ENCODE measurements at regions of chr10 and their contacts with region 1.

Region 1: GRCh38 chr10:93406364-93407145 is 75.6 kb downstream of the MYOF start:
- DNase-seq: no peak
- ATAC-seq: no peak
- H3K4me3 ChIP-seq: no peak overlapping the region
- H3K4me3 Mint-ChIP-seq: no peak overlapping the region
- H3K27ac ChIP-seq: no peak overlapping the region
- H3K27ac Mint-ChIP-seq: no peak overlapping the region
- H3K4me1 ChIP-seq: peaks cover 21 to 28% of the 10 kb centered on the region in 2 experiments
- H3K4me1 Mint-ChIP-seq: peaks cover 32 to 39% (median 36%) of the 10 kb centered on the region in 3 donors
- H3K27me3 ChIP-seq: no peaks in the 10 kb centered on the region
- H3K27me3 Mint-ChIP-seq: no peaks in the 10 kb centered on the region

Region 2: GRCh38 chr10:92790440-92790839 is 616.1 kb before region 1 on chr10:
- CTCF ChIA-PET with region 1: interaction called in 1 of 2 experiments, 12 read pairs
- POLR2A ChIA-PET with region 1: no interaction called
- DNase-seq: no peak
- ATAC-seq: no peak
- H3K4me3 ChIP-seq: no peak overlapping the region
- H3K4me3 Mint-ChIP-seq: no peak overlapping the region
- H3K27ac ChIP-seq: no peak overlapping the region
- H3K27ac Mint-ChIP-seq: no peak overlapping the region
- H3K4me1 ChIP-seq: no peaks in the 10 kb centered on the region
- H3K4me1 Mint-ChIP-seq: peaks cover 0 to 6% (median 0%) of the 10 kb centered on the region in 3 donors
- H3K27me3 ChIP-seq: peaks cover 0 to 17% of the 10 kb centered on the region in 2 experiments
- H3K27me3 Mint-ChIP-seq: peaks cover 11 to 28% of the 10 kb centered on the region in 2 donors

Region 3: DNA sequence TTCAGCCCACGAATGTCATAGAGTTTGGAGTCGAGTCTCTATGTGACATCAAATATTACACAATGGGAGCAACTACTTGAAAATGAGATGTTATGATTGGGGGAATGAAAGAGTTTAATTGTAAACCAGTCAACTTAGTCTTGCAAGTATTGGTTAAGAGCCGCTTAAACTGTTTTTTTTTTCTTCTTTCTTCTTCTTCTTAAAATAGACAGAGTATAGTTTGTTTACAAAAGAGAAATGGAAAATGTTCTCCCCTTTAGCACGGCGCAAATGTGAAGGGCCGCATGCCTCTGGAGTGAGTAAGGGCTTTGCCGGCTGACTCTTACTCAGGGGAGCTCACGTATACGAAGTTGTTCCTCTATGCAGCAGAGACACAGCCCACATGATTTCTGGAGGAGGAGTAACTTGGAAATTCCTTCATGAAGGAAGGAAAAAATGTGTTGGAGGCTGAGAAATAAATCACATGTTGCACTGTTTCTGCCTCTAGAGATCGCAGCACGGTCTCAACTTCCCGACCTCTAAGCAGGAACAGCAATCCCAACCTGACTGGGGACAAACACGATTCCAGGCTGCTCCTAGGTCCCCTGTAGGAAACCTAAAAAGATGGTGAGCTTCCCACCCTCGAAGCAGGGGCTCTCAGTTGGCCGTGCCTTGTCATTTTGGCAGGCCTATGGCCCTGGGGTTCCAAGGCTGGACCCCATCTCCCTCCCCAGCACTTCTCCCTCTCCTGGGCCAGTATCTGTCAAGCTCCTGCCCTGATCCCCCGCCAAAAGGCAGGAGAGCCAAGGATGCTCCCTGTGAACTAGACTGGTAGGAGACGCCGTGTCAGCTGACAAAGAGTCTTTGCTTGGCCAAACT is 30.8 kb after region 1 on chr10:
- CTCF ChIA-PET with region 1: no interaction called
- POLR2A ChIA-PET with region 1: no interaction called
- DNase-seq: peak in 1 of 35 experiments; percentile 3
- ATAC-seq: no peak
- H3K4me3 ChIP-seq: no peak overlapping the region
- H3K4me3 Mint-ChIP-seq: no peak overlapping the region
- H3K27ac ChIP-seq: no peak overlapping the region
- H3K27ac Mint-ChIP-seq: no peak overlapping the region
- H3K4me1 ChIP-seq: no peaks in the 10 kb centered on the region
- H3K4me1 Mint-ChIP-seq: no peaks in the 10 kb centered on the region
- H3K27me3 ChIP-seq: peaks cover 0 to 3% of the 10 kb centered on the region in 2 experiments
- H3K27me3 Mint-ChIP-seq: no peaks in the 10 kb centered on the region

Measured in T-cell (primary cell).